Caco-2 (cell line): ENCODE measurements at regions of chr19 and their contacts with region 1.

Region 1: GRCh38 chr19:42325273-42325895 is at the start of gene MEGF8:
- DNase-seq: peak; percentile 99
- H3K4me3 ChIP-seq: peak within 1 kb of the TSS; percentile 71
- H3K4me3 Mint-ChIP-seq: peak within 1 kb of the TSS; percentile 89
- H3K27ac Mint-ChIP-seq: peak within 1 kb of the TSS; percentile 72
- H3K4me1 ChIP-seq: no peaks in the 10 kb centered on the region; the same call in 1 of the 2 replicates
- H3K4me1 Mint-ChIP-seq: peaks cover 17% of the 10 kb centered on the region
- H3K27me3 ChIP-seq: no peaks in the 10 kb centered on the region
- H3K27me3 Mint-ChIP-seq: peaks cover 3% of the 10 kb centered on the region
- CTCF ChIP-seq: peak; percentile 81 to 91
- total RNA-seq, gene MEGF8: 17.9 and 19.3 TPM in 2 replicates

Region 2: GRCh38 chr19:42108527-42109389 is 216.6 kb before region 1 on chr19:
- CTCF ChIA-PET with region 1: no interaction called
- POLR2A ChIA-PET with region 1: no interaction called
- intact Hi-C with region 1: loop called (anchors 1 kb)
- DNase-seq: peak; percentile 78 to 80
- H3K4me3 ChIP-seq: no peak overlapping the region
- H3K4me3 Mint-ChIP-seq: no peak overlapping the region
- H3K27ac Mint-ChIP-seq: no peak overlapping the region
- H3K4me1 ChIP-seq: no peaks in the 10 kb centered on the region
- H3K4me1 Mint-ChIP-seq: no peaks in the 10 kb centered on the region
- H3K27me3 ChIP-seq: 0 out of 2 replicates have a peak, but pooled peaks cover 1% of the 10 kb centered on the region
- H3K27me3 Mint-ChIP-seq: peaks cover 17% of the 10 kb centered on the region
- CTCF ChIP-seq: peak; percentile 98 to 99

Region 3: GRCh38 chr19:42261763-42262162 is 63.6 kb before region 1 on chr19:
- CTCF ChIA-PET with region 1: no interaction called
- POLR2A ChIA-PET with region 1: interaction called, 15 read pairs
- intact Hi-C with region 1: no loop called
- DNase-seq: no peak
- H3K4me3 ChIP-seq: no peak overlapping the region
- H3K4me3 Mint-ChIP-seq: no peak overlapping the region
- H3K27ac Mint-ChIP-seq: no peak overlapping the region
- H3K4me1 ChIP-seq: no peaks in the 10 kb centered on the region
- H3K4me1 Mint-ChIP-seq: peaks cover 1% of the 10 kb centered on the region
- H3K27me3 ChIP-seq: no peaks in the 10 kb centered on the region
- H3K27me3 Mint-ChIP-seq: no peaks in the 10 kb centered on the region
- CTCF ChIP-seq: no peak

Region 4: DNA sequence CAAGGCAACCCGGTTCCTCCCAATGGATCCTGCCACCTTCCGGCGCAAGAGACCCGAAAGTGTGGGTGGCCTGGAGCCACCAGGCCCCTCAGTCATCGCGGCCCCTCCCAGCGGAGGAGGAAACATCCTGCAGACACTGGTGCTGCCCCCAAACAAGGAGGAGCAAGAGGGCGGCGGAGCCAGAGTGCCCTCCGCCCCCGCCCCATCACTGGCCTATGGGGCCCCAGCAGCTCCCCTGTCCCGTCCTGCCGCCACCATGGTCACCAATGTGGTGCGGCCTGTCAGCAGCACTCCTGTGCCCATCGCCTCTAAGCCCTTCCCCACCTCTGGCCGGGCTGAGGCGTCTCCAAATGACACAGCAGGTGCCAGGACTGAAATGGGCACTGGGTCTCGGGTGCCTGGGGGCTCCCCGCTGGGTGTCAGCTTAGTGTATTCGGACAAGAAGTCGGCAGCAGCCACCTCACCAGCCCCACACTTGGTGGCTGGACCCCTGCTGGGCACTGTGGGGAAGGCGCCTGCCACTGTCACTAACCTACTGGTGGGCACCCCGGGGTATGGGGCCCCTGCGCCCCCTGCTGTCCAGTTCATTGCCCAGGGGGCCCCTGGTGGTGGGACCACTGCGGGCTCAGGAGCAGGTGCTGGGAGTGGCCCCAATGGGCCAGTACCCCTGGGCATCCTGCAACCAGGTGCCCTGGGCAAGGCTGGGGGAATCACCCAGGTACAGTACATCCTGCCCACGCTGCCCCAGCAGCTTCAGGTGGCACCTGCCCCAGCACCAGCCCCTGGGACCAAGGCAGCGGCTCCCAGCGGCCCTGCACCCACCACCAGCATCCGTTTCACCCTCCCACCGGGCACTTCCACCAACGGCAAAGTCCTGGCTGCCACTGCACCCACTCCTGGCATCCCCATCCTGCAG is 34.6 kb before region 1 on chr19:
- CTCF ChIA-PET with region 1: no interaction called
- POLR2A ChIA-PET with region 1: no interaction called
- intact Hi-C with region 1: no loop called
- DNase-seq: peak; percentile 64 to 75
- H3K4me3 ChIP-seq: no peak overlapping the region
- H3K4me3 Mint-ChIP-seq: no peak overlapping the region
- H3K27ac Mint-ChIP-seq: no peak overlapping the region
- H3K4me1 ChIP-seq: peaks cover 9% of the 10 kb centered on the region; the same call in 1 of the 2 replicates
- H3K4me1 Mint-ChIP-seq: peaks cover 14% of the 10 kb centered on the region
- H3K27me3 ChIP-seq: no peaks in the 10 kb centered on the region
- H3K27me3 Mint-ChIP-seq: no peaks in the 10 kb centered on the region
- CTCF ChIP-seq: peak; percentile 80 to 88

Region 5: DNA sequence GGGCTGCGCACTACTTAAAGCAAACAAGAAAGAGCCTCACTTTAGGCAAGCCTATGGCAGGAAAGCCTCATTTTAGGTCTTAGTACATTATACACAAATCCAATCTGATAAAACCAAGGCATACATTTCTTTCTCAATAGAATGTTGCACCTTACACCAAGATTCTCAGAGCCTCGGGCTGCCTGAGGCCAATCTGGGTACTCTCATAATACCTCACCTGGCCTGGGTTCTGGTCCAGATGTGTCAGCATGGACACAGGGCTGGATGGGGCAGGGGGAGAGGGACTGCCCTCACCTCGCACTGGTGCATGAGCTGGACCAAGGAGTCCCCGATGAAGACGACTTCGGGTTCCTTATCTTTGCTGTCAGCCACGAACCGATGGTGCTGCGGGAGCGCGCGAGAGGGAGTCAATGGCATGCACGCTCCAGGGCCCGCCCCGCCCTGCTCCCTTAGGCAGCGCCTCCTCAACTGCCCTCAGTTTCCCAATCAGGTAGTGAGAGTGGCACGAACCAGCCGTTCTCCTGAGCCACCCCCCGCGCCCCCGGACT is 23.7 kb before region 1 on chr19 and contains the start of gene PRR19:
- CTCF ChIA-PET with region 1: no interaction called
- POLR2A ChIA-PET with region 1: no interaction called
- intact Hi-C with region 1: loop called (anchors 1 kb)
- DNase-seq: no peak
- H3K4me3 ChIP-seq: peak within 1 kb of the TSS; percentile 64
- H3K4me3 Mint-ChIP-seq: peak within 1 kb of the TSS; percentile 98
- H3K27ac Mint-ChIP-seq: peak within 1 kb of the TSS; percentile 94
- H3K4me1 ChIP-seq: peaks cover 10% of the 10 kb centered on the region
- H3K4me1 Mint-ChIP-seq: peaks cover 14% of the 10 kb centered on the region
- H3K27me3 ChIP-seq: no peaks in the 10 kb centered on the region
- H3K27me3 Mint-ChIP-seq: no peaks in the 10 kb centered on the region
- CTCF ChIP-seq: no peak
- total RNA-seq, gene PRR19: 2.8 and 2.9 TPM in 2 replicates

Region 6: DNA sequence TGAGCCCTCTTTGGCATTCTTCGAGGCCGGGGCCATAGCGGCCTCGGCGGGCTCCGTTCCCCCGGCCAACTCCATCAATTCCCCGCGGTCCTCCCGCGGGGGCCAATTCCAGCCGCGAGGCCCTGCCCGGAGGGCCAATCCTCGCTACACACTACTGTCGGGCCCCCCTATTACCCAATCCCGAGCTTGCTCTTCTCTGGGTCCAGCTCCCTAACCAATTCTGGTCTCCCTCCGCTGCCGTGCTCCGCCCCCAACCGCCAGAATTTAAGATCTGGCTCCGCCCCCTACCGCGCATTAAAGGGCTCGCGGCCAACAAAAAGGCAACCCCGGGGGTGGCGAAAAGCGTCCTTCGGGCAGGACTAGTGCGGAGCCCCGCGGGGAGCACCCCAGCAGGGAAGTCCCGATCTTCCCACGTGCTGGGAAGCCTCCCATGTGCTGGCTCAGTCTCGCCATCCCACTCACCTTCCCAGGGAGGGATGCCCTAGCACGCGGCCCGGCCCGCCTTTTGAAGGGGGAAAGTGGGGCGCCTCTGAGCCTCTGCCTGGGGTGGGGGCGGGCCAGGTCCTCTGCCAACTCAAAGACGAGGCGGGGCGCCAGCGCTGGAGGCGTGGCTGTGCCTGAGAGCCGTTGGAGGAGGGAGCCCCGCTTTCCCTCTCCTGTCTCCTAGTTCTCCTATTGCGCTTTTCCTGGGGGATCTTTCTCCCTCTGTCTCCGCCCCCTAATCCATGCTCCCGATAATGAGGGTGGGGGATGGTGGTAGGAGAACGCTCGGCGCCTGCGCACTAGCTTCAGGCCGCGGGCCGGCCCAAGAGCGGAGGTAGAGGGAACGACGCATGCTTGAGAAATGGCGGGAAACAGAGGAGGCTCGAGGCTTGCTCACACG is 98.3 kb after region 1 on chr19:
- CTCF ChIA-PET with region 1: no interaction called
- POLR2A ChIA-PET with region 1: no interaction called
- intact Hi-C with region 1: loop called (anchors 1 kb)
- DNase-seq: peak; percentile 95
- H3K4me3 ChIP-seq: peak overlapping the region; percentile 81
- H3K4me3 Mint-ChIP-seq: peak overlapping the region; percentile 86
- H3K27ac Mint-ChIP-seq: peak overlapping the region; percentile 28
- H3K4me1 ChIP-seq: peaks cover 14% of the 10 kb centered on the region
- H3K4me1 Mint-ChIP-seq: peaks cover 20% of the 10 kb centered on the region
- H3K27me3 ChIP-seq: no peaks in the 10 kb centered on the region
- H3K27me3 Mint-ChIP-seq: no peaks in the 10 kb centered on the region
- CTCF ChIP-seq: no peak

Region 7: DNA sequence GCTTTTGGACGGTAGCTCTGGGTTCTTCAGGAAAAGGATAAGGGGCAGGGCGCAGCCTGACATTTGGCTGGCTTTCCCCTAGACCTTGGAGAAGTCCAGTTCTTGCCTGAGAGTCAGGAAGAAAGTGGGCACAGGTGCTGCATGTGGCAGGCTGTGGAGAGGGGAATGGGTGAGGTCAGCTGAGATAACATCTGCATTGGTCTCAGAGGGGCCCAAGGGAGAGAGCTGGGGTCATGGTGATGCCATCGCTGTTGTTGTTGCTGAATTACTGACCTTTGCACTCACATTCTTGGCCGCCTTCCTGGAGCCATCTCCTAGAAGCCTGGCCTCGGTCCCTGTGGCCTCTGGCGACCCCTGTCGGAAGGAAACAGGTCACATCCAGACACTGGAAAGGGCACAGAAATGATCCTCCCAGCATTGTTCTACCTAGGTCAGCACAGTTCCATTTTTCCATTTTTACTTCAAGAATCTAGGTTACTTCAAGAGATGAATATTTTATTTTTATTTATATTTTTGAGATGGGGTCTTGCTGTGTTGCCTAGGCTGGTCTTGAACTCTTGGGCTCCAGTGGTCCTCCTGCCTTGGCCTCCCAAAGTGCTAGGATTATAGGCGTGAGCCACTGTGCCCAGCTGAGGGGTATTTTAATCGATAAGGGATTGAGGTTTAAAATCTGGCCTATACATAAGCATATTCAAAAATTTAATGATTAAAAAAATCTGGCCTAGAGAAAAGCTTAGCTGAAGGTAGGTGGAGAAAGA is 108.3 kb after region 1 on chr19:
- CTCF ChIA-PET with region 1: no interaction called
- POLR2A ChIA-PET with region 1: no interaction called
- intact Hi-C with region 1: loop called (anchors 1 kb)
- DNase-seq: peak; percentile 92 to 94
- H3K4me3 ChIP-seq: no peak overlapping the region
- H3K4me3 Mint-ChIP-seq: peak overlapping the region; percentile 51
- H3K27ac Mint-ChIP-seq: peak overlapping the region; percentile 94
- H3K4me1 ChIP-seq: peaks cover 15% of the 10 kb centered on the region
- H3K4me1 Mint-ChIP-seq: peaks cover 22% of the 10 kb centered on the region
- H3K27me3 ChIP-seq: no peaks in the 10 kb centered on the region
- H3K27me3 Mint-ChIP-seq: no peaks in the 10 kb centered on the region
- CTCF ChIP-seq: peak; percentile 82 to 91